Panc1 (cell line): ENCODE measurements at regions of chr3 and their contacts with region 1.

Region 1: DNA sequence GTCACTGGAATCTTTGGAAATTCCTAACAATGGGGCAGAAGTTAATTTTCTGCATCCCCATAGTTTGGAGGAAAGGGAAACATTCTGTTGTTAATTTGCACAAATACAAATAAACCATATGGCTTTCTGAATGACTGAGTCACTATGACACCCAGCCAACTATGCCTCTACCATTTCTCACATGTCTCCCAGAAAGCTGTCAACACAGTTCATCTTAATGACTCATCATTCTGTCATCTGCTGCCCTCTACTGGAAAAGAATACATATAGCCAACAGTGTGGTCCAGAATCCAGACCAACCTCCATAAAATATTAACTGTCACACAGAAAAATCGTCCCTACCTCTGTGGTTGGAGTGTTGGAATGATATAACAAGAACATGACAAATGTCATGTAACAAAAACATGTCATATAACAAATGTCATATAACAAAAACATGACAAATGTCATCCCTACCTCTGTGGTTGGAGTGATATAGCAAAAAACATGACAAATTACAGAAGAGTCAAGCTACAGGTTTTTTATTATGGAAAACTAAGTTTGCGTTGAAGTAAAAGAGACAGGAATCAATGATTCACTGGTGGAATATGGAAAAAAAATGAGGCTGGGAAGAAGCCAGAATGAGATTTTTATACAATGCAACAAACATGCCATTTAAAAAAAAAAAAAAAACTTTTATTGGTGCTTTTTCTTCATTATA is 47.7 kb upstream of the GYG1 start:
- DNase-seq: peak; percentile 80
- ATAC-seq: peak; percentile 86
- H3K4me3 ChIP-seq: no peak overlapping the region
- H3K27ac ChIP-seq: no peak overlapping the region
- H3K4me1 ChIP-seq: no peaks in the 10 kb centered on the region
- H3K27me3 ChIP-seq: peaks cover 12% of the 10 kb centered on the region
- CTCF ChIP-seq: peak; percentile 83

Region 2: GRCh38 chr3:148727247-148727646 is 216.4 kb before region 1 on chr3:
- CTCF ChIA-PET with region 1: interaction called, 7 read pairs
- POLR2A ChIA-PET with region 1: no interaction called
- in situ Hi-C with region 1: no loop called
- intact Hi-C with region 1: loop called (anchors 2 kb)
- DNase-seq: no peak
- ATAC-seq: peak; percentile 83
- H3K4me3 ChIP-seq: no peak overlapping the region
- H3K27ac ChIP-seq: no peak overlapping the region
- H3K4me1 ChIP-seq: no peaks in the 10 kb centered on the region
- H3K27me3 ChIP-seq: peaks cover 2% of the 10 kb centered on the region
- CTCF ChIP-seq: peak; percentile 69

Region 3: DNA sequence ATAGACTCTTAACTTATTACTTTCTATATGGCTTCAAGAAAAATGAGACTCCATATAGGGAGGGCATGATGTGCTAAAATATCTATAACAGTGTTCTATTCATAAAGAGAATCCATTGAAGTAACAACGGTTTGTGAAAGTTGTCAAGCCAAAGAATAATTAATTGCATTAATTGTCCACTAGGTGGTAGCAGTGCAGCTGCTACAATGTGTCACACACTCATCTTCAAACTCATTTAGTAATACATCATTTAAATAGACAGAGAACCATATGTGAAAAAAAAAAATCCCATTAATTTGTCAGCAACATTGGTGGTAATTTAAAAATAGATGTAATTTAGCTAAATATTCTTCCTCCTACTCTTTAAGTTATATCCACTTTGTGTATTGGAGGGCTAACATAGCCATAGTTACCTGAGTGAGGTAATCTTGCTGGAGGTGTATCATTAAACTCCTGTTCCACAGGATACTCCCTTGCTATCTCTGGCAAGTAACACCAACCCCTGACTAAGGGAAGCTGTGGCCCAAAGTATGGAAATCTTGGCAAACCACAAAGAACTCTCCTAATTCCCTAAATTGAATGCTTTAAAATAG is 82.3 kb before region 1 on chr3:
- CTCF ChIA-PET with region 1: interaction called, 6 read pairs
- POLR2A ChIA-PET with region 1: no interaction called
- in situ Hi-C with region 1: no loop called
- intact Hi-C with region 1: loop called (anchors 1 kb)
- DNase-seq: peak; percentile 15
- ATAC-seq: peak; percentile 77
- H3K4me3 ChIP-seq: no peak overlapping the region
- H3K27ac ChIP-seq: no peak overlapping the region
- H3K4me1 ChIP-seq: no peaks in the 10 kb centered on the region
- H3K27me3 ChIP-seq: peaks cover 23% of the 10 kb centered on the region
- CTCF ChIP-seq: peak; percentile 78; the same call in 1 of the 2 replicates

Region 4: GRCh38 chr3:149207475-149207874 is 263.8 kb after region 1 on chr3:
- CTCF ChIA-PET with region 1: no interaction called
- POLR2A ChIA-PET with region 1: no interaction called
- in situ Hi-C with region 1: no loop called
- intact Hi-C with region 1: no loop called
- DNase-seq: no peak
- ATAC-seq: no peak; the same call in 1 of the 2 replicates
- H3K4me3 ChIP-seq: no peak overlapping the region
- H3K27ac ChIP-seq: peak overlapping the region; percentile 29; the same call in 1 of the 2 replicates
- H3K4me1 ChIP-seq: no peaks in the 10 kb centered on the region
- H3K27me3 ChIP-seq: no peaks in the 10 kb centered on the region
- CTCF ChIP-seq: no peak